ENCODE measurements at regions of chr17 and their contacts with region 1.

Region 1: GRCh38 chr17:49952209-49952911 is 16.6 kb upstream of the DLX4 start:
- DNase-seq: peak; percentile 50 to 97
- H3K4me3 ChIP-seq: no peak overlapping the region
- H3K27ac ChIP-seq: no peak overlapping the region
- H3K4me1 ChIP-seq: no peaks in the 10 kb centered on the region
- H3K27me3 ChIP-seq: peaks cover 0 to 6% (median 2%) of the 10 kb centered on the region in 4 experiments; a peak in 2 of 7 replicates
- CTCF ChIP-seq: peak; percentile 94 to 99 (median 97)
- EP300 ChIP-seq: no peak
- POLR2A ChIP-seq: no peak
- RAD21 ChIP-seq: peak; percentile 81 to 88

Region 2: GRCh38 chr17:49843774-49844350 is 108.5 kb before region 1 on chr17:
- CTCF ChIA-PET with region 1: no interaction called
- POLR2A ChIA-PET with region 1: no interaction called
- DNase-seq: peak in 1 of 2 experiments; percentile 82
- H3K4me3 ChIP-seq: no peak overlapping the region
- H3K27ac ChIP-seq: no peak overlapping the region
- H3K4me1 ChIP-seq: 0 out of 7 replicates have a peak, but pooled peaks cover 0 to 2% (median 0%) of the 10 kb centered on the region in 4 experiments
- H3K27me3 ChIP-seq: no peaks in the 10 kb centered on the region
- CTCF ChIP-seq: peak; percentile 72 to 80 (median 77)
- EP300 ChIP-seq: no peak
- POLR2A ChIP-seq: no peak
- RAD21 ChIP-seq: peak; percentile 64 to 73

Region 3: DNA sequence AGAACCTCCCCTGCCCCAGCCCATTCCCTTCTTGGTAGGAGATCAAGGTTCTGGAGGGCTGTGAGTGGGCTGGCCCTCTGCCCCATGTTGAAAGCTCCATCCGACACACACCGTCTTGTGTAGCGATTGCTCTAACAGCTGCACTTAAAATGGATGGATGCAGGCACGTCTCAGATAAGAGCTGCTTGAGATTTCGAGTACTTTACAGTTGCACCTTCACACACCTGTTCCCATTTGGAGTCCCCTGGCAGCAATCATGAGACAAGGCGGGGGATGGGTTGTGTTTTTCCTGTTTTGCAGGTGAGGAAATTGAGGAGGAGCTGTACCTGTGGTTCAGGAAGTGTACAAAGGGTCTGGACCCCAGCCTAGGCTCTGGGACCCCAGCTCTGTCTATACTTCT is 78.9 kb before region 1 on chr17:
- CTCF ChIA-PET with region 1: interaction called, 39 read pairs
- POLR2A ChIA-PET with region 1: no interaction called
- DNase-seq: no peak
- H3K4me3 ChIP-seq: no peak overlapping the region
- H3K27ac ChIP-seq: no peak overlapping the region
- H3K4me1 ChIP-seq: peaks cover 0 to 16% (median 11%) of the 10 kb centered on the region in 4 experiments; a peak in 6 of 7 replicates
- H3K27me3 ChIP-seq: no peaks in the 10 kb centered on the region; a peak in 1 of 7 replicates
- CTCF ChIP-seq: no peak
- EP300 ChIP-seq: no peak
- POLR2A ChIP-seq: no peak
- RAD21 ChIP-seq: no peak

Region 4: DNA sequence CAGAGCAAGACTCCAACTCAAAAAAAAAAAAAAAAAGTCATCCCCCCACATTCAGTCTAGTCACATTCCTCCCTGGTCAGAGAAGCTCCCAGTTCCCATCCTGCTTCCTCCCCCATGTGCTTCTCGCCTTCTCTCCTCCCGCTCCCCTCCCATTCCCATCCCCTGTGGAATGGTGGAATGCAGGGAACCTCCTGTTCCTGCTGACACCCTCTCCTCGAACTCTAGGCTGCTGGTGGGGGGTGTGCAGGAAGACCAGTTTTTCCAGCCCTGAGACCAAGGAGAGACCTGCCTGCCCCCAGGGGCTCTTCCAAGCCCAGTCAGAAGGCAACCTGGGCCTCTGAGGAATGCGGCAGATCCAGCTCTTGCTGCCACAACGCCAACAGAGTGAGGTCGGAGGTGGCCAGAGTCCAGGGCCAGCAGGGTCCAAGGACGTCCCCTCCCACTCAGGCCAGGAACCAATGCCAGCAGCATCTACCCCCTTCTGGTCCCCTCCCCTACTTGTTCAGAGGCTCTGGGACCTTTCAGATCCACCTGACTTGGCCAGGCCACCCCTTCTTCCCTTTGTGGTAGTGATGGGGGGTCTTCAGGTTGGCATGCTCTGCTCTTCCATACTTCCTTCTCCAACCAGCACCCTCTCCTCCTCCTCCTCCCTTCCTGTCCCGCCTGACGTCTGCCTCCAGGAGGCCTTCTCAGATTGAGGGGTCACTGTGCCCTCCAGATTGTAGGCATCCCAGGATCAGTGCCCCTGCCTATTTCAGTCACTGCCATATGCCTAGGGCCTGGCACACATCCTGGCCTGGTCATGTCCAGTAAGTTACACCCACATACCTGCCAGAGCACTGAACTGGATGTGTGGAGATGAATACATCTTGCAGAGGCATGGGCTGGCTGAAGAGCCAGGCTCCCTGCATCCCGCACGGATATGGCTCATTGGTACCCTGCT is 65.0 kb before region 1 on chr17:
- CTCF ChIA-PET with region 1: interaction called, 22 read pairs
- POLR2A ChIA-PET with region 1: no interaction called
- DNase-seq: no peak
- H3K4me3 ChIP-seq: peak overlapping the region in 1 of 4 experiments; percentile 2; a peak in 1 of 8 replicates
- H3K27ac ChIP-seq: no peak overlapping the region
- H3K4me1 ChIP-seq: peaks cover 4 to 16% (median 13%) of the 10 kb centered on the region in 4 experiments
- H3K27me3 ChIP-seq: peaks cover 3 to 26% (median 20%) of the 10 kb centered on the region in 4 experiments
- CTCF ChIP-seq: no peak
- EP300 ChIP-seq: no peak
- POLR2A ChIP-seq: no peak
- RAD21 ChIP-seq: no peak; a peak in 1 of 4 replicates

Region 5: GRCh38 chr17:49910094-49910857 is 42.1 kb before region 1 on chr17:
- CTCF ChIA-PET with region 1: interaction called, 30 read pairs
- POLR2A ChIA-PET with region 1: interaction called, 4 read pairs
- DNase-seq: peak in 1 of 2 experiments; percentile 82
- H3K4me3 ChIP-seq: peak overlapping the region; percentile 42 to 69 (median 60)
- H3K27ac ChIP-seq: no peak overlapping the region
- H3K4me1 ChIP-seq: peaks cover 1 to 24% (median 17%) of the 10 kb centered on the region in 4 experiments
- H3K27me3 ChIP-seq: peaks cover 12 to 72% (median 66%) of the 10 kb centered on the region in 4 experiments
- CTCF ChIP-seq: no peak
- EP300 ChIP-seq: no peak
- POLR2A ChIP-seq: no peak
- RAD21 ChIP-seq: no peak

Region 6: DNA sequence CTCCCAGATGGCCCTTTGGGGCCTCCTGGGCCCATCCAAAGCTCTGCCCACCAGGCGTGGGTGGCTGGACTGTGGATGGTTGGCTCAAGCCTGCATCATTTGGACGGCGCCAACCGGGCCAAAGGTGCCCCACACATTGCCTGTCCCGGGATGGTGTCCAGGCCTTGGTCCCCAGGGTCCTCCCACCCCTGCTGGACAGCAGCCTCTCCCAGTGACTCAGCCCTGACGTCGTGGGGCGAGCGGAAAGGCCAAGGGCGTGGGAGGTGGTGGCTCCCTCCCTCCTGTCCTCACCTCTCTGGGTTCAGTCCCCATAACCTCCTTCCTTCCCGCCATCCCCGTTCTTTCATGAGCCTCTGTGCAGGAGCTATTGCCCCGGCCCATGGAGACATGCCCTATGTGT is 25.5 kb before region 1 on chr17:
- CTCF ChIA-PET with region 1: interaction called, 87 read pairs
- POLR2A ChIA-PET with region 1: no interaction called
- DNase-seq: no peak
- H3K4me3 ChIP-seq: no peak overlapping the region
- H3K27ac ChIP-seq: no peak overlapping the region
- H3K4me1 ChIP-seq: no peaks in the 10 kb centered on the region
- H3K27me3 ChIP-seq: no peaks in the 10 kb centered on the region
- CTCF ChIP-seq: no peak
- EP300 ChIP-seq: no peak
- POLR2A ChIP-seq: no peak
- RAD21 ChIP-seq: no peak

Region 7: DNA sequence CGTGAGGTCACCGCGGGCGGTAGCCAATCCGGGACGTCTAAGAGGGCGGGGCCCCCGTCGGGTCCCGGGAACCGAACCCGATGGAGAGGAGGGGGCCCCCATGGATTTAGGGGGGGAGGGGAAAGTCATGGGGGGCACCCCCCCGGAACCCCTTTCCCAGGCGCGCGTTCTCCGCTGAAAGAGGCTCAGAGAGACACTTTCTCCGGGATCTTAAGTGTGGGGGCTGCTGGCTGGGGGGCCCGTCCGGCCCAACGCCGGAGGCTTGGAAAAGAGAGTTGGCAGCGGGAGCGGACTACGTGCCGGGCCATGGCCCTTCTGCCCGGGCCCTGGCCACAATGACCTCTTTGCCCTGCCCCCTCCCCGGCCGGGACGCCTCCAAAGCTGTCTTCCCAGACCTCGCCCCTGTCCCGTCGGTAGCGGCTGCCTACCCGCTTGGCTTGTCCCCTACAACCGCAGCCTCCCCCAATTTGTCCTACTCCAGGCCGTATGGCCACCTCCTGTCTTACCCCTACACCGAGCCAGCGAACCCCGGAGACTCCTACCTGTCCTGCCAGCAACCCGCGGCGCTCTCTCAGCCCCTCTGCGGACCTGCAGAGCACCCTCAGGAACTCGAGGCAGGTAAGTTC is 16.9 kb after region 1 on chr17 and contains the start of gene DLX4:
- CTCF ChIA-PET with region 1: interaction called, 73 read pairs
- POLR2A ChIA-PET with region 1: interaction called, 7 read pairs
- DNase-seq: peak in 1 of 2 experiments; percentile 81
- H3K4me3 ChIP-seq: peak within 1 kb of the TSS; percentile 53 to 78 (median 62)
- H3K27ac ChIP-seq: no peak within 1 kb of the TSS
- H3K4me1 ChIP-seq: peaks cover 0 to 38% (median 25%) of the 10 kb centered on the region in 4 experiments; a peak in 6 of 7 replicates
- H3K27me3 ChIP-seq: peaks cover 91 to 100% (median 96%) of the 10 kb centered on the region in 4 experiments
- CTCF ChIP-seq: no peak
- EP300 ChIP-seq: no peak
- POLR2A ChIP-seq: no peak
- RAD21 ChIP-seq: no peak
- total RNA-seq, gene DLX4: 0.80 and 0.88 TPM in 2 replicates

Region 8: DNA sequence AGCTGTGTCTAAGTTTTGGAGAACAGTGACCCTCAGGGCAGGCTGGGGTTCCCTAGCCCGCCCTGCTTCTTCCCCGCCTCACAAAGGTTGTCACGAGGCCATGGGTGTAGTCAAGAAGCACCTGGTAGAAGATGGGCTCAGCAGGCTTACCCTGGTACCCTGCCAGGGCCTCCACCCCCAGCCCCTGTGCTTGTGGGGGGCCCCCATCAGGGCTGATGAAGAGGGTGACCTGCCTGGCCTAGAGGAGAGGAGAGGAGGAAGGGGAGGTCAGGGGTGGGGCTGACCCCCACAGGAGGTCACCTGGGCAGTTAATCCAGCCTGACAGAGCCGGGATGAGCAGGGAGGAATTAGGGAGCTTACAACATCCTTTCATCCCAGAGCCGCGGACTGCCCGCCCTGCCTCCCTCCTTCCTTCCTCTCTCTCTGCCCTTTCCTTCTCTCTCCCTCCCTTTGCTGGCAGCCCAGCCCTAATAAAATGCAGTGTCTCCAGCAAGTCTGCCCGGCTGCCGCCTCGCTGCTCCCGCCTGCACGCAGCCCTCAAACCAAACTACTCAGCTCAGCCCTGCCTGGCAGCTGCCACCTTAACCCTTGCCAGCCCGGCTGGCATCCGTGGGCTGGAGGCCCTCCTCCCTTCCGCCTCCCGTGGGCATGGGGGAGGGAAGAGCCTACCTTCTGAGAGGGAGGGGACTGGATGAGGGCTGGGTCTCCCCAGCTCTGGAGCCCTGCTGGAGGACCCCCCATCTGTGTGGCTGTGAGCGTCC is 35.5 kb after region 1 on chr17:
- CTCF ChIA-PET with region 1: interaction called, 275 read pairs
- POLR2A ChIA-PET with region 1: no interaction called
- DNase-seq: peak in 1 of 2 experiments; percentile 51
- H3K4me3 ChIP-seq: peak overlapping the region in 1 of 4 experiments; percentile 24; a peak in 1 of 8 replicates
- H3K27ac ChIP-seq: no peak overlapping the region
- H3K4me1 ChIP-seq: peaks cover 1 to 17% (median 13%) of the 10 kb centered on the region in 4 experiments
- H3K27me3 ChIP-seq: peaks cover 31 to 71% (median 65%) of the 10 kb centered on the region in 4 experiments
- CTCF ChIP-seq: no peak
- EP300 ChIP-seq: no peak
- POLR2A ChIP-seq: no peak
- RAD21 ChIP-seq: no peak

Region 9: DNA sequence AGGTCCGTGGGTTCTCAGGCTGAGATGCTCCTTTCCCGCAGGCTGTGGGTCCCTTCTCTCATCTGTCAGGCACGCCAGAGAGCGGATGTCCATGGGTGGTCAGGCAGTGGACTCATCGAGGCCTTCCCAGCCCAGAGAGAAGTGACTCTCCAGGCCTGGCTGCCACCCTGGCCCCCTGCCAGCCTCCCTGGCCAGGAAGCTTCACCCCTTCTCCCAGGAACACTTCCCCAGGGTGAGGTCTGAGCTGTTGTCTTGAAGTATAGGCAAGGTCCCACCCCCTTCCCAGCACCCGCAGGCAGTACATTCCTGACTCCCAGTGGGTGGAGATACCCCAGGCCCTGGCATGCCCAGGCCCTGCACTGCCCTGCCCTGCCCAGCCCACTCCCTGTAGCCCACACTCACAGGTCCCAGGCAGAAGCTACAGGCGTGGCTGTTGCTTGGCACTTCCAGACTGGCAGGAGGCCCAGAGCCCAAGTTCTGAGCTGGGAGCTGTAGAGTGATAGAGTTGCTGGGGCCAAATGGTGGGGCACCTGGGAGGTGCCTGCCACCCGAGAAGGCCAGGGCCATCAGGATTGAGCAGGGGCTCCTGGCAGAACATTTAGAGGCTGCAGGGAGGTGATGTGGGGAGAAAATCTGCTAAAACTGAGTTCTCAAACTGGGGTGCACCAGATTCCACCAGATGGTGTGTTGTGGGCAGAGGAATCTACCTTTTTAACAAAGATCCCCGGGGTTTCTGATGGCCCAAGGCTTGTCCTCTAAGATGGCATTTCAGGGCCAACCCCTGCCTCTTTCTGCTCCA is 110.2 kb after region 1 on chr17:
- CTCF ChIA-PET with region 1: no interaction called
- POLR2A ChIA-PET with region 1: no interaction called
- DNase-seq: no peak
- H3K4me3 ChIP-seq: no peak overlapping the region
- H3K27ac ChIP-seq: no peak overlapping the region
- H3K4me1 ChIP-seq: peaks cover 0 to 7% (median 2%) of the 10 kb centered on the region in 4 experiments; a peak in 5 of 7 replicates
- H3K27me3 ChIP-seq: peaks cover 0 to 4% (median 3%) of the 10 kb centered on the region in 4 experiments; a peak in 5 of 7 replicates
- CTCF ChIP-seq: no peak
- EP300 ChIP-seq: no peak
- POLR2A ChIP-seq: no peak
- RAD21 ChIP-seq: no peak

Measured in H1 (cell line).